B cell (primary cell): ENCODE measurements at regions of chr9 and their contacts with region 1.

Region 1: DNA sequence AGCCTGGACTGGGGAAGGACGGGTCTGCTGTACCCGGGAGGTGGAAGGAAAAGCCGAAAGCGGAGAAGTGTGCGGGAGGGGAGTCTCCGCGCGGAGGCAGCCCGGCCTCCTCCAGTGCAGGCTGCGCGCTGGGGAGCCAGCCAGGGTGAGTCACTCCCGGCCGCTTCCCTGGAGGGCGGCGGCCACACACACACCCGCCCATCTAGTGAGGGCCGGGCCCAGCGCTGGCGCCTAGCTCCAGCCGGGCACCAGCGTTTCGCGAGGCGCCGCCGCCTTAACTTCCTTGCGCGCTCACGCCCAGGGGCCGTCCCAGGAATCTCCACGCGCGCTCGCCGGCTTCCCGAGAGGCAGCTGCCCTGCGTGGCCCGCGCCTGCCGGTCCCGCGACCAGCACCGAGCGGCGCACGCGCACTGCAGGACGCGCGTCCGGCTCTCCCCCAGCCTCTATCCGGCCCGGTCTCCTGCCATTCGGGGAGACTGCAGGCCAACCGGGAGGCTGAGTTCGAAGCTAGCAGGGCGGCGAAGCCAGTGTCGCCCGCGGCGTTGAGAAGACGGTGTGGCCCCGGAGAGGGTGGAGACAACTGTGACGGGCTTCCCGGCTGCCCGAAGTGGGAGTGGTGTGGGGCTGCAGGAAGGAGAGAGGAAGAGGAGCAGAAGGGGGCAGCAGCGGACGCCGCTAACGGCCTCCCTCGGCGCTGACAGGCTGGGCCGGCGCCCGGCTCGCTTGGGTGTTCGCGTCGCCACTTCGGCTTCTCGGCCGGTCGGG is at the start of gene JAK2:
- DNase-seq: peak; percentile 89
- ATAC-seq: peak; percentile 76
- H3K4me3 ChIP-seq: peak within 1 kb of the TSS; percentile 67 to 88 (median 80)
- H3K4me3 Mint-ChIP-seq: peak within 1 kb of the TSS; percentile 94
- H3K27ac ChIP-seq: peak within 1 kb of the TSS; percentile 67 to 80
- H3K27ac Mint-ChIP-seq: peak within 1 kb of the TSS; percentile 97
- H3K4me1 ChIP-seq: peaks cover 32 to 34% of the 10 kb centered on the region in 2 donors
- H3K4me1 Mint-ChIP-seq: peaks cover 38% of the 10 kb centered on the region
- H3K27me3 ChIP-seq: no peaks in the 10 kb centered on the region
- H3K27me3 Mint-ChIP-seq: no peaks in the 10 kb centered on the region
- CTCF ChIP-seq: peak; percentile 25
- total RNA-seq, gene JAK2: 24.6 and 26.4 TPM in 2 replicates

Region 2: DNA sequence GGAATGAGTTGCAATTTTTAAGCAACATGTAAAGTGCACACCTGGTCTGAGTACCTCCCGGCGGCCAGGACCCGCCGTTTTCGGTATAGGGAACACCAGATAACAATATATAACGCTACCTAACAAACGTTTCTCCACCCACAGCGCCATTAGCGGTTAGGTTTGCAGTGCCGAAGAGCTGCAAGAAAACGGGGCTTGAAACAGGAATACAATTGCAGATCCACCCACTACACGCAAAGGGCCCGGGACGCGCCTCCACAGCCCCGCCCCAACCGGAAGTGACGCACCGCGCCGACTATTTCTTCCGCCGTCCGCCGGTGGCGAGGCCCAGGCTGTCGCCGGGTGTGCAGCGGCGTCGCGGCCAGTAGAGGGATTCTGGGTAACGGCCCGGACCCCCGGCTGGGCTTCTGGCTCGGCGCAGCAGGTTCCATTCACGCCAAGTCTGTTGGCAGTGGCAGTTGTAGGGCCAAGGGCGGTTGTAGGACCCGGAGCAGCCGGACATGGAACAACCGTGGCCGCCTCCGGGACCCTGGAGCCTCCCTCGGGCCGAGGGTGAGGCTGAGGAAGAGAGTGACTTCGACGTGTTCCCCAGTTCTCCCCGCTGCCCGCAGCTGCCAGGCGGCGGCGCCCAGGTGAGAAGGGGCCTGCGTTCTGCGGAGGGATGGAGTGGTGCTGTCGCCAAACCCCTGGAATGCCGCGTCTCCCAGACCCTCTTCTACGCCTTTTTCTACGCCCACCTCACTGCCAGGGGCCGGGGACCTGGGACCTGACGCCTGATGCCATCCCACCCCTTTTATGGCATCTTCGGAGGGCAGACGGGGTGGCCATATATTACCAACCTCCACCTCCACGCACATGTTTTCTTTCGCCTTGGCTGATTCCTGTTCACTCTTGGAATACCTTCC is 305.3 kb before region 1 on chr9 and contains the start of gene CDC37L1:
- CTCF ChIA-PET with region 1: no interaction called
- POLR2A ChIA-PET with region 1: no interaction called
- intact Hi-C with region 1: loop called (anchors 1 kb)
- DNase-seq: peak; percentile 98
- ATAC-seq: peak; percentile 95
- H3K4me3 ChIP-seq: peak within 1 kb of the TSS; percentile 58 to 97 (median 72)
- H3K4me3 Mint-ChIP-seq: no peak within 1 kb of the TSS
- H3K27ac ChIP-seq: peak within 1 kb of the TSS; percentile 89 to 93
- H3K27ac Mint-ChIP-seq: no peak within 1 kb of the TSS
- H3K4me1 ChIP-seq: peaks cover 17 to 20% of the 10 kb centered on the region in 2 donors
- H3K4me1 Mint-ChIP-seq: peaks cover 3% of the 10 kb centered on the region
- H3K27me3 ChIP-seq: no peaks in the 10 kb centered on the region
- H3K27me3 Mint-ChIP-seq: no peaks in the 10 kb centered on the region
- CTCF ChIP-seq: peak; percentile 72
- total RNA-seq, gene CDC37L1: 16.0 and 19.3 TPM in 2 replicates

Region 3: GRCh38 chr9:4762108-4762885 is 222.5 kb before region 1 on chr9:
- CTCF ChIA-PET with region 1: interaction called, 164 read pairs
- POLR2A ChIA-PET with region 1: interaction called, 3 read pairs
- intact Hi-C with region 1: loop called (anchors 1 kb)
- DNase-seq: peak; percentile 87
- ATAC-seq: peak; percentile 73
- H3K4me3 ChIP-seq: peak overlapping the region; percentile 22 to 62 (median 56)
- H3K4me3 Mint-ChIP-seq: peak overlapping the region; percentile 82
- H3K27ac ChIP-seq: peak overlapping the region in 1 of 2 donors; percentile 28
- H3K27ac Mint-ChIP-seq: peak overlapping the region; percentile 17
- H3K4me1 ChIP-seq: peaks cover 10 to 20% of the 10 kb centered on the region in 2 donors
- H3K4me1 Mint-ChIP-seq: peaks cover 22% of the 10 kb centered on the region
- H3K27me3 ChIP-seq: no peaks in the 10 kb centered on the region
- H3K27me3 Mint-ChIP-seq: no peaks in the 10 kb centered on the region
- CTCF ChIP-seq: peak; percentile 89

Region 4: DNA sequence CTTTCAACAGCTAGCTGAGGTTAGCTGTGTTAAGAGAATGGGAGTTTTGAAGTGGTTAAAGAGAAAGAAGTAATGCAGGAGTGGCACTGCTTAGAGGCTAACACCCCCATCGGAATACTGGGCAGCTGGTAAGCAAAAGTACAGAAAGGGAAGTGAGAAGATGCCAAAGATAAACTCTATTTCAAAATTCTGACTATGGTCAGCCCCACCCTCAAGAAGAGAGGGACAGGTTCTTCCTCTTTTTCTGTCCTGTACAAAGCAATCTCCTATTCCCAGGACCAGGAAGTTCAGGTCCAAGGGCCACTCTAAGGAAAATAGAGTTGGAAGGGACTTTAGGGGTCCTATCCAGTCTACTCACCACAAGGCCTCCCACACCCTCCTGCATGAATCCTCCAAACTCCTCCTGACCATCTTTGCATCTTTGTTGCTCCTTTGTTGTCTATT is 45.7 kb before region 1 on chr9:
- CTCF ChIA-PET with region 1: interaction called, 22 read pairs
- POLR2A ChIA-PET with region 1: no interaction called
- intact Hi-C with region 1: loop called (anchors 2 kb)
- DNase-seq: peak; percentile 66
- ATAC-seq: peak; percentile 93
- H3K4me3 ChIP-seq: peak overlapping the region in 2 of 5 experiments; percentile 10 to 41
- H3K4me3 Mint-ChIP-seq: peak overlapping the region; percentile 72
- H3K27ac ChIP-seq: peak overlapping the region; percentile 24 to 67
- H3K27ac Mint-ChIP-seq: peak overlapping the region; percentile 84
- H3K4me1 ChIP-seq: peaks cover 41 to 44% of the 10 kb centered on the region in 2 donors
- H3K4me1 Mint-ChIP-seq: peaks cover 57% of the 10 kb centered on the region
- H3K27me3 ChIP-seq: no peaks in the 10 kb centered on the region
- H3K27me3 Mint-ChIP-seq: no peaks in the 10 kb centered on the region
- CTCF ChIP-seq: no peak

Region 5: GRCh38 chr9:5593904-5594303 is 609.1 kb after region 1 on chr9:
- CTCF ChIA-PET with region 1: interaction called, 5 read pairs
- POLR2A ChIA-PET with region 1: no interaction called
- intact Hi-C with region 1: loop called (anchors 5 kb)
- DNase-seq: peak; percentile 84
- ATAC-seq: peak; percentile 57
- H3K4me3 ChIP-seq: no peak overlapping the region
- H3K4me3 Mint-ChIP-seq: peak overlapping the region; percentile 50
- H3K27ac ChIP-seq: peak overlapping the region in 1 of 2 donors; percentile 40
- H3K27ac Mint-ChIP-seq: peak overlapping the region; percentile 69
- H3K4me1 ChIP-seq: peaks cover 41 to 44% of the 10 kb centered on the region in 2 donors
- H3K4me1 Mint-ChIP-seq: peaks cover 68% of the 10 kb centered on the region
- H3K27me3 ChIP-seq: no peaks in the 10 kb centered on the region
- H3K27me3 Mint-ChIP-seq: no peaks in the 10 kb centered on the region
- CTCF ChIP-seq: no peak

Region 6: GRCh38 chr9:6412487-6413364 is 1427.9 kb after region 1 on chr9 and contains the start of gene UHRF2:
- CTCF ChIA-PET with region 1: no interaction called
- POLR2A ChIA-PET with region 1: no interaction called
- intact Hi-C with region 1: loop called (anchors 10 kb)
- DNase-seq: peak; percentile 100
- ATAC-seq: peak; percentile 87
- H3K4me3 ChIP-seq: peak within 1 kb of the TSS; percentile 72 to 89 (median 87)
- H3K4me3 Mint-ChIP-seq: peak within 1 kb of the TSS; percentile 88
- H3K27ac ChIP-seq: peak within 1 kb of the TSS; percentile 95 to 97
- H3K27ac Mint-ChIP-seq: peak within 1 kb of the TSS; percentile 98
- H3K4me1 ChIP-seq: peaks cover 61 to 62% of the 10 kb centered on the region in 2 donors
- H3K4me1 Mint-ChIP-seq: peaks cover 58% of the 10 kb centered on the region
- H3K27me3 ChIP-seq: no peaks in the 10 kb centered on the region
- H3K27me3 Mint-ChIP-seq: no peaks in the 10 kb centered on the region
- CTCF ChIP-seq: no peak
- total RNA-seq, gene UHRF2: 153 and 171 TPM in 2 replicates